ENCODE measurements at regions of chr13 and their contacts with region 1.

Region 1: GRCh38 chr13:28568288-28568687 is 73.4 kb upstream of the FLT1 start:
- DNase-seq: no peak
- H3K4me3 ChIP-seq: no peak overlapping the region
- H3K27ac ChIP-seq: no peak overlapping the region
- H3K4me1 ChIP-seq: no peaks in the 10 kb centered on the region
- H3K27me3 ChIP-seq: no peaks in the 10 kb centered on the region
- CTCF ChIP-seq: no peak

Region 2: GRCh38 chr13:28623782-28624706 is 55.8 kb after region 1 on chr13:
- intact Hi-C with region 1: no loop called
- DNase-seq: no peak
- H3K4me3 ChIP-seq: no peak overlapping the region
- H3K27ac ChIP-seq: no peak overlapping the region
- H3K4me1 ChIP-seq: no peaks in the 10 kb centered on the region
- H3K27me3 ChIP-seq: no peaks in the 10 kb centered on the region
- CTCF ChIP-seq: no peak

Region 3: DNA sequence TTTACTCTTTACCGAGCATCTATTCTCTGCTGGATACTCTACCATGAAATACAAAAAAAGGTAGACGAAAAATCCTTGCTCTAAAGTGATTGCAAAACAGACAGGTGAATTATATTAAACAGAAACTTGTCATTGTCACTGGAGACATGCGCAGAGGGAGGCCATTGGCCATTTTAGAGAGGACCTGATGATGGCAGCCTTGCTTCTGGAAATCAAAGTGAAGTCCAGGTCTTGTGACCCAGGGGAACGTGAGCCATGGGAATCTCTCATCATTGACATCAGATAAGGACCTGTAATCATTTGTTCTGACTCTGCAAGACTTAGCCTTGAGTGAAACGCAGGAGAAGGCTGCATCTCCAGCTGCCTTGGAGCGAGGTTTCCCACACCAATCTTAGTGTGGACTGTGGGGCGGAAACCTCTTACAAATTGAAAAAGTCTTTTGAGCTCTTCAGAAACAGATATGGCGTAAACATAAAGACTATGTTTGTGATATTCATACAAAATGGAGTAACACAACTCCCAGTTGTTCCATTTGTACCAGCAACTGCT is 167.3 kb after region 1 on chr13:
- intact Hi-C with region 1: loop called (anchors 10 kb)
- DNase-seq: no peak
- H3K4me3 ChIP-seq: no peak overlapping the region
- H3K27ac ChIP-seq: no peak overlapping the region
- H3K4me1 ChIP-seq: no peaks in the 10 kb centered on the region
- H3K27me3 ChIP-seq: no peaks in the 10 kb centered on the region
- CTCF ChIP-seq: no peak

Measured in ascending aorta (tissue), 2 donors.